ENCODE measurements at regions of chr4 and their contacts with region 1.

Region 1: DNA sequence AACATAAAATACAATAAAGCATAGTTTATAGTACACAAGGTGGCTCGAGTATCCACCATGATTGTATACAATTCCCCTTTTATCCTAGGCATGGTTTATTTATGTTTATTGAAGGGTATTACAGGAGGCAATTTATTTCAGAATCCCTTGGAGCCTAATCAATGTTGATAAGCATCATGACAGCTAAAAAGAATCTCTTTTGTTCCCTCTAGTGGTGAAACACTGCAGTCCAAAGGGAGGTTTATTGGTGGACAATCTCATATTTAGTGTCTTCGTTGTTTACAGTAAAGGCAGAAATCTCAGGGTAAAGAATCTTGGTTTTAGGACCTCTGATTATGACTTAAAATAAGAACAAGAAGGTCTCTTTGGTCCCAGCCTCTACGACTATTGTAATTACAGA is 1712.5 kb downstream of the C4orf33 start:
- DNase-seq: peak; percentile 13
- ATAC-seq: peak; percentile 73
- H3K4me3 ChIP-seq: no peak overlapping the region
- H3K27ac ChIP-seq: no peak overlapping the region
- H3K4me1 ChIP-seq: no peaks in the 10 kb centered on the region
- H3K27me3 ChIP-seq: no peaks in the 10 kb centered on the region
- CTCF ChIP-seq: peak; percentile 42
- EP300 ChIP-seq: no peak
- POLR2A ChIP-seq: no peak
- RAD21 ChIP-seq: no peak

Region 2: DNA sequence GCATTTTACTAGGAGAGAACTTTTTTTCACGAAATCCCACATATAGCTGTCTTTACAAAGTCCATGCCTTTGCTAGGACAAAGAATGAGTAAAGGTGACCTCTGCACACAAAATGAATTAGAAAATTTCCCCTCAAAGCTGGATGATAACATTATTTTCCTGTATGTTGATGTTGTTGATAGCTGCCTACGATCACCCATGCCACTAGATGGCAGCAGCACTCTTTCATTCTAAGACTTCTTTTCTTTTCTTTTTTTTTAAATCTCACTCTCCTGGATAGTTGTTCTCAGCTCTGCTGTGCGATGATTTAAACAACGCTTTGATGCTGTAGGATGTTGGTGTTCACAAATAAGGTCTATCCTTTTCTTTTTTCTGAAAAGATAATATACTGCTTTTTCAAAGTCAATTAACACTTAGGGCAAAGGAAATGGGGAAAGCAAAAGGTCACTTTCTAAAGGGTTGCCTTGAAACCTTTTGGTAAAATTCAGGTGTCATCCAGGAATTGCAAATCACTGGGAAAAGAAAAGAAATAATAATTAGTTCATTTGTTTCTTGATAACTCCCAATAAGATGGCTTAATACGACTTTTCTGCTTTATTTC is 1445.7 kb before region 1 on chr4:
- CTCF ChIA-PET with region 1: no interaction called
- POLR2A ChIA-PET with region 1: no interaction called
- in situ Hi-C with region 1: no loop called
- intact Hi-C with region 1: loop called (anchors 2 kb)
- DNase-seq: peak; percentile 50
- ATAC-seq: peak; percentile 67
- H3K4me3 ChIP-seq: no peak overlapping the region
- H3K27ac ChIP-seq: no peak overlapping the region
- H3K4me1 ChIP-seq: no peaks in the 10 kb centered on the region
- H3K27me3 ChIP-seq: peaks cover 0 to 5% of the 10 kb centered on the region in 2 experiments; a peak in 1 of 5 replicates
- CTCF ChIP-seq: peak; percentile 78
- EP300 ChIP-seq: no peak
- POLR2A ChIP-seq: no peak
- RAD21 ChIP-seq: 0 out of 2 replicates have a peak, but pooled peaks have one; percentile 16

Region 3: DNA sequence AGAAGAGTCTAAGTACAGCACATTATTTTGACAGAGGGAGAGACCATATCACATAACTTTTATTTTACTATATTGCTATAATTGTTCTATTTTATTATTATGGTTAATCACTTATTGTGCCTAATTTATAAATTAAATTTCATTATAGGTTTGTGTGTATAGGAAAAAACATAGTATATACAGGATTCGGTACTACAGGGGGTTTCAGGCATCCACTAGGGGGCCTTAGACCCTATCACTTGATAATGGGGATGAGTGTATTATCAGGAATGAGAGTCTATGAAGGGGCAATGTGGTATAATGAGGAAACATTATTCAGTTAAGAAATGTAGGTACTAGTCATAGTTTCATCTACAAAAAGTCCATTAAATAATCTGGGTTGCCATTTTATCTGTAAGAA is 879.4 kb before region 1 on chr4:
- CTCF ChIA-PET with region 1: no interaction called
- POLR2A ChIA-PET with region 1: no interaction called
- in situ Hi-C with region 1: no loop called
- intact Hi-C with region 1: loop called (anchors 5 kb)
- DNase-seq: no peak
- ATAC-seq: peak; percentile 73
- H3K4me3 ChIP-seq: no peak overlapping the region
- H3K27ac ChIP-seq: no peak overlapping the region
- H3K4me1 ChIP-seq: no peaks in the 10 kb centered on the region
- H3K27me3 ChIP-seq: no peaks in the 10 kb centered on the region; a peak in 1 of 5 replicates
- CTCF ChIP-seq: peak; percentile 28
- EP300 ChIP-seq: no peak
- POLR2A ChIP-seq: no peak
- RAD21 ChIP-seq: no peak

Region 4: GRCh38 chr4:130359542-130359941 is 448.9 kb before region 1 on chr4:
- CTCF ChIA-PET with region 1: interaction called, 4 read pairs
- POLR2A ChIA-PET with region 1: no interaction called
- in situ Hi-C with region 1: no loop called
- intact Hi-C with region 1: loop called (anchors 1 kb)
- DNase-seq: peak; percentile 1
- ATAC-seq: no peak
- H3K4me3 ChIP-seq: no peak overlapping the region
- H3K27ac ChIP-seq: no peak overlapping the region
- H3K4me1 ChIP-seq: no peaks in the 10 kb centered on the region
- H3K27me3 ChIP-seq: no peaks in the 10 kb centered on the region
- CTCF ChIP-seq: peak; percentile 29
- EP300 ChIP-seq: no peak
- POLR2A ChIP-seq: no peak
- RAD21 ChIP-seq: no peak

Region 5: DNA sequence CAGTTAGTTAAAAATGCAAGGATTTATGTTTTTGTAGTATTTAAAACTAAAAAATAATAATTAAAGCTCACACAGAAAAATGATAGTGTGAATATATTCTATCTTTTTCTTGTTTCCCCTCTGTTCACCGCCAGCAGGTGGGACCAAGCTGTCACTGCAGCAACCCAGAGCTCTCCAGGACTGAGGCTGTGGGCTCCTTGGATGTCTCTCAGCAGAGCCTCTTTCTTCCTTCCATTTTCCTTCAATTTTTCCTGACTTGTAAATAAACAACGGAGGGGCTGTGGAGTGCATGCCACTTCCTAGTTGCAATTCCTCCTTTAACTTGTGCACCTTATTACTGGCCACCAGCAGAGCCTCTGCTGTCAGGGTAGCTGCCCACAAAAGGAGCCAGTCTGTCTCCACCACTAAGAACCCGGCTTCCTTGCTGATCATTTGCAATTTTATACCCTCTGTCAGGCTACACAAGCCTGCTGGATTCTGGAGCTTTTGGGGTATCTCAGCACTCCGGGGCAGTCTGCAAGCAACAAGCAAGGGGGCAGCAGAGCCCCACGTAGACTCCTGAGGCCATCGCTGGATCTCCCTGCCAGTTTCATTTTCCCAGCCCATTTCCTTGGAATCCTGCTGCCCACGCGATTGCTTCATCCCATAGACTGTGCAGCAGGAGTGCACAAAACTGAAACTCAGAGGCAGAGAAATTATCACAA is 245.2 kb before region 1 on chr4:
- CTCF ChIA-PET with region 1: interaction called, 8 read pairs
- POLR2A ChIA-PET with region 1: no interaction called
- in situ Hi-C with region 1: loop called (anchors 25 kb)
- intact Hi-C with region 1: loop called (anchors 1 kb)
- DNase-seq: peak; percentile 8
- ATAC-seq: peak; percentile 99
- H3K4me3 ChIP-seq: peak overlapping the region in 1 of 3 experiments; percentile 34; a peak in 2 of 6 replicates
- H3K27ac ChIP-seq: no peak overlapping the region
- H3K4me1 ChIP-seq: no peaks in the 10 kb centered on the region
- H3K27me3 ChIP-seq: no peaks in the 10 kb centered on the region
- CTCF ChIP-seq: peak; percentile 64
- EP300 ChIP-seq: no peak
- POLR2A ChIP-seq: no peak
- RAD21 ChIP-seq: 0 out of 2 replicates have a peak, but pooled peaks have one; percentile 25

Region 6: GRCh38 chr4:130632731-130633604 is 175.5 kb before region 1 on chr4:
- CTCF ChIA-PET with region 1: no interaction called
- POLR2A ChIA-PET with region 1: no interaction called
- in situ Hi-C with region 1: no loop called
- intact Hi-C with region 1: no loop called
- DNase-seq: peak; percentile 10
- ATAC-seq: peak; percentile 56
- H3K4me3 ChIP-seq: no peak overlapping the region
- H3K27ac ChIP-seq: no peak overlapping the region
- H3K4me1 ChIP-seq: no peaks in the 10 kb centered on the region
- H3K27me3 ChIP-seq: no peaks in the 10 kb centered on the region
- CTCF ChIP-seq: no peak
- EP300 ChIP-seq: no peak
- POLR2A ChIP-seq: no peak
- RAD21 ChIP-seq: no peak

Region 7: GRCh38 chr4:130995988-130996387 is 187.5 kb after region 1 on chr4:
- CTCF ChIA-PET with region 1: no interaction called
- POLR2A ChIA-PET with region 1: no interaction called
- in situ Hi-C with region 1: no loop called
- intact Hi-C with region 1: no loop called
- DNase-seq: no peak
- ATAC-seq: no peak
- H3K4me3 ChIP-seq: no peak overlapping the region
- H3K27ac ChIP-seq: no peak overlapping the region
- H3K4me1 ChIP-seq: no peaks in the 10 kb centered on the region
- H3K27me3 ChIP-seq: no peaks in the 10 kb centered on the region
- CTCF ChIP-seq: no peak
- EP300 ChIP-seq: no peak
- POLR2A ChIP-seq: no peak
- RAD21 ChIP-seq: no peak

Region 8: DNA sequence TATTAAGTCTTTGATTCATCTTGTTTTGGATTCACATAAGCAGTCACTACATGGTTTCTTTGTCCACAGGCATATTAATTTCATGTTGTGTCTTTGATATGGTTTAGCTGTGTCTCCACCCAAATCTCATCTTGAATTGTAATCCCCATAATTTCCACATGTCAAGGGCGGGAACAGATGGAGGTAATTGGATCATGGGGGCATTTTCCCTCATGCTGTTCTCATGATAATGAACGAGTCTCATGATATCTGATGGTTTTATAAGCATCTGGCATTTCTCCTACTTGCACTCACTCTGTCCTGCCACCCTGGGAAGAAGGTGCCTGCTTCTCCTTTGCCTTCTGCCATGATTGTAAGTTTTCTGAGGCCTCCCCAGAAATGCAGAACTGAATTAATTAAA is 529.4 kb after region 1 on chr4:
- CTCF ChIA-PET with region 1: no interaction called
- POLR2A ChIA-PET with region 1: no interaction called
- in situ Hi-C with region 1: no loop called
- intact Hi-C with region 1: no loop called
- DNase-seq: no peak
- ATAC-seq: no peak
- H3K4me3 ChIP-seq: no peak overlapping the region
- H3K27ac ChIP-seq: no peak overlapping the region
- H3K4me1 ChIP-seq: no peaks in the 10 kb centered on the region
- H3K27me3 ChIP-seq: no peaks in the 10 kb centered on the region
- CTCF ChIP-seq: no peak
- EP300 ChIP-seq: no peak
- POLR2A ChIP-seq: no peak
- RAD21 ChIP-seq: no peak